B cell (primary cell): ENCODE measurements at regions of chr2 and their contacts with region 1.

Region 1: DNA sequence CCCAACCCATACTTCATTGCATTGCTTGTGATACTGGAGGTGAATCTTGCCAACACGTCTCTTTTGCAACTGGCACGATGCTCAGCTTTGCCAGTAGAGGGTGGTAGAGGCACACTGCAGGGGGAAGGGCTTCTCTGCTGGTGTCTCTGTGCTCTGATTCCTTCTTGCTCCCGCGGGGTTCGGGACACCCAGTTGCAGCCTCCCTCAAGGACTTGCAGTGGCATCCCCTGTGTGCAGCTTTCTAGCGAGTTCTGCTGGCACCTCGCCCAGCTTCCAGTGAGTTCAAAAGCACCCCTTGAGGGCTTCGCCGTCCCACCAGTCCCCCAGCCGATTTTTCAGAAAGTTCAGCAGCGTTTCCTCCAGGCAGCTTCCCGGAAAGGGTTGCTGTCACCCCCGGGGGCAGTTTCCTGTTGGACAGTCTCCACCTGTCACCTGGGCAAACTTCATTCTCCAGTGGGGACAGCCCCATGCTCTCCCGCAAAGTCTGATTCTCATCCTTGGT is 35.3 kb upstream of the EN1 start:
- DNase-seq: peak; percentile 67
- ATAC-seq: peak; percentile 61
- H3K4me3 ChIP-seq: peak overlapping the region in 4 of 5 experiments; percentile 27 to 54 (median 44)
- H3K4me3 Mint-ChIP-seq: peak overlapping the region; percentile 80
- H3K27ac ChIP-seq: no peak overlapping the region
- H3K27ac Mint-ChIP-seq: no peak overlapping the region
- H3K4me1 ChIP-seq: peaks cover 5 to 8% of the 10 kb centered on the region in 2 donors
- H3K4me1 Mint-ChIP-seq: peaks cover 8% of the 10 kb centered on the region
- H3K27me3 ChIP-seq: peaks cover 0 to 26% (median 6%) of the 10 kb centered on the region in 4 experiments
- H3K27me3 Mint-ChIP-seq: peaks cover 34% of the 10 kb centered on the region
- CTCF ChIP-seq: peak; percentile 81

Region 2: GRCh38 chr2:118865106-118865505 is 17.7 kb before region 1 on chr2:
- CTCF ChIA-PET with region 1: interaction called, 29 read pairs
- POLR2A ChIA-PET with region 1: no interaction called
- intact Hi-C with region 1: no loop called
- DNase-seq: peak; percentile 52
- ATAC-seq: peak; percentile 57
- H3K4me3 ChIP-seq: no peak overlapping the region
- H3K4me3 Mint-ChIP-seq: no peak overlapping the region
- H3K27ac ChIP-seq: no peak overlapping the region
- H3K27ac Mint-ChIP-seq: no peak overlapping the region
- H3K4me1 ChIP-seq: no peaks in the 10 kb centered on the region
- H3K4me1 Mint-ChIP-seq: no peaks in the 10 kb centered on the region
- H3K27me3 ChIP-seq: peaks cover 0 to 28% (median 20%) of the 10 kb centered on the region in 4 experiments
- H3K27me3 Mint-ChIP-seq: peaks cover 44% of the 10 kb centered on the region
- CTCF ChIP-seq: peak; percentile 47

Region 3: DNA sequence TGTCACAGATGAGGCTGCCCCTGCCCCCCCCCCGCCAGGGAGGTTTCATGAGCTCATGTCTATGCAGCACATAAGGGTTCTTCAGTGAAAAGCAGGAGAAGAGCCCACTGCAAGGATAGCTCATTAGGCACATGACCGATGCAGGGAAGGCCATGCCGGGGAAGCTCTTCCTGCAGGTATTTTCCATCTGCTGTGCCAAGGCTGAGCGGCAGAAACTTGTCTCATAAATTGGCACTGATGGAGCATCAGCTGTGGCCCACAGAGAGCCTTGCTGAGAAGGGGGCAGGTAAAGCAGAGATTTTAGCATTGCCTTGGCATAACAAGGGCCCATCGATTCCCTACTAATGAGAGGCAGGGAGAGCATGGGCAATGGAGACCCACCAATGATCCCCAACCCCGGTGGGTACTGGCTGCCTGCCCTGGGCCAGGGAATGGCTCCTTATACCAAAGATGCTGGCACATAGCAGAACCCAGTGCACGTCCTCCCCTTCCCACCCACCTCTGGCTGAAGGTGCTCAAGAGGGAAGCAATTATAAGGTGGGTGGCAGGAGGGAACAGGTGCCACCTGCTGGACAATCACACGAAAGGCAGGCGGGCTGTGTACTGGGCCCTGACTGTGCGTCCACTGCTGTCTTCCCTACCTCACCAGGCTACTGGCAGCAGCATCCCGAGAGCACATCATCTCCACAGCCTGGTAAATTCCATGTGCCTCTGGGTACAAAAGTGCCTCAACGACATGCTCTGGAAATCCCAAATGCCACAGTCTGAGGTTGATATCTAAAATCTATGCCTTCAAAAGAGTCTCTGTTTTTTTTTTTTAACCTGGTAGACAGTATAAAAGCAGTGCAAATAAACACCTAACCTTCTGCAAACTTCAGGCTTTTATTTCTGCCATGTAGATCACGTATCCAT is 382.3 kb after region 1 on chr2:
- CTCF ChIA-PET with region 1: interaction called, 27 read pairs
- POLR2A ChIA-PET with region 1: no interaction called
- intact Hi-C with region 1: no loop called
- DNase-seq: peak; percentile 44
- ATAC-seq: peak; percentile 51
- H3K4me3 ChIP-seq: no peak overlapping the region
- H3K4me3 Mint-ChIP-seq: no peak overlapping the region
- H3K27ac ChIP-seq: no peak overlapping the region
- H3K27ac Mint-ChIP-seq: no peak overlapping the region
- H3K4me1 ChIP-seq: no peaks in the 10 kb centered on the region
- H3K4me1 Mint-ChIP-seq: no peaks in the 10 kb centered on the region
- H3K27me3 ChIP-seq: no peaks in the 10 kb centered on the region
- H3K27me3 Mint-ChIP-seq: peaks cover 15% of the 10 kb centered on the region
- CTCF ChIP-seq: peak; percentile 73

Region 4: GRCh38 chr2:119290859-119291587 is 408.3 kb after region 1 on chr2:
- CTCF ChIA-PET with region 1: interaction called, 29 read pairs
- POLR2A ChIA-PET with region 1: no interaction called
- intact Hi-C with region 1: no loop called
- DNase-seq: peak; percentile 65
- ATAC-seq: peak; percentile 68
- H3K4me3 ChIP-seq: no peak overlapping the region
- H3K4me3 Mint-ChIP-seq: no peak overlapping the region
- H3K27ac ChIP-seq: no peak overlapping the region
- H3K27ac Mint-ChIP-seq: no peak overlapping the region
- H3K4me1 ChIP-seq: no peaks in the 10 kb centered on the region
- H3K4me1 Mint-ChIP-seq: peaks cover 2% of the 10 kb centered on the region
- H3K27me3 ChIP-seq: no peaks in the 10 kb centered on the region
- H3K27me3 Mint-ChIP-seq: no peaks in the 10 kb centered on the region
- CTCF ChIP-seq: peak; percentile 72

Region 5: DNA sequence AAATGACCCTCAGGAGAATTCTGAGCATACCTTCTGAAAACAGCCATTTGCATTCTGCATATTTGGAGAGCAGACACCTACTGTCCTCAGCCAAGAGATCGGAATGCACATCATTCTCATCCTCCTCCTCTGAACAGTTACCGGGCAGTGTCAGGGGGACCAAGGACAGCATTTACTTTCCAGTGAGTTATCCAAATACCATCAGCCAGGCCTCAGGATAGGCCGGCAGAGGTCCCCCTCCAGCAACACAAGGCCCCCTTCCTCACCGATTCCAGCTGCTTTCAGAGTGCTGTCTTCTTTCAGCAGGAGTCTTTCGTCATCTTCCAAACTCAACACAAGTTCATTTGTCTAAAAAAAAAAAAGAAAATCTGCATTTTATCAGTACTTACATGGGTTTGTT is 428.6 kb after region 1 on chr2:
- CTCF ChIA-PET with region 1: interaction called, 18 read pairs
- POLR2A ChIA-PET with region 1: no interaction called
- intact Hi-C with region 1: no loop called
- DNase-seq: no peak
- ATAC-seq: no peak
- H3K4me3 ChIP-seq: no peak overlapping the region
- H3K4me3 Mint-ChIP-seq: no peak overlapping the region
- H3K27ac ChIP-seq: no peak overlapping the region
- H3K27ac Mint-ChIP-seq: no peak overlapping the region
- H3K4me1 ChIP-seq: peaks cover 3% of the 10 kb centered on the region in 2 donors
- H3K4me1 Mint-ChIP-seq: peaks cover 22% of the 10 kb centered on the region
- H3K27me3 ChIP-seq: no peaks in the 10 kb centered on the region
- H3K27me3 Mint-ChIP-seq: no peaks in the 10 kb centered on the region
- CTCF ChIP-seq: no peak

Region 6: GRCh38 chr2:119476301-119477021 is 593.7 kb after region 1 on chr2:
- CTCF ChIA-PET with region 1: interaction called, 18 read pairs
- POLR2A ChIA-PET with region 1: no interaction called
- intact Hi-C with region 1: no loop called
- DNase-seq: peak; percentile 58
- ATAC-seq: peak; percentile 70
- H3K4me3 ChIP-seq: no peak overlapping the region
- H3K4me3 Mint-ChIP-seq: no peak overlapping the region
- H3K27ac ChIP-seq: no peak overlapping the region
- H3K27ac Mint-ChIP-seq: no peak overlapping the region
- H3K4me1 ChIP-seq: no peaks in the 10 kb centered on the region
- H3K4me1 Mint-ChIP-seq: no peaks in the 10 kb centered on the region
- H3K27me3 ChIP-seq: peaks cover 0 to 10% (median 2%) of the 10 kb centered on the region in 4 experiments
- H3K27me3 Mint-ChIP-seq: peaks cover 16% of the 10 kb centered on the region
- CTCF ChIP-seq: peak; percentile 92